Ascending aorta (tissue), 2 donors: ENCODE measurements at regions of chr21 and their contacts with region 1.

Region 1: GRCh38 chr21:32494934-32495703 is 82.6 kb downstream of the EVA1C start:
- DNase-seq: peak in 1 of 2 donors; percentile 65
- H3K4me3 ChIP-seq: no peak overlapping the region
- H3K27ac ChIP-seq: peak overlapping the region; percentile 53 to 83
- H3K4me1 ChIP-seq: peaks cover 20 to 42% of the 10 kb centered on the region in 2 donors
- H3K27me3 ChIP-seq: no peaks in the 10 kb centered on the region
- CTCF ChIP-seq: no peak

Region 2: DNA sequence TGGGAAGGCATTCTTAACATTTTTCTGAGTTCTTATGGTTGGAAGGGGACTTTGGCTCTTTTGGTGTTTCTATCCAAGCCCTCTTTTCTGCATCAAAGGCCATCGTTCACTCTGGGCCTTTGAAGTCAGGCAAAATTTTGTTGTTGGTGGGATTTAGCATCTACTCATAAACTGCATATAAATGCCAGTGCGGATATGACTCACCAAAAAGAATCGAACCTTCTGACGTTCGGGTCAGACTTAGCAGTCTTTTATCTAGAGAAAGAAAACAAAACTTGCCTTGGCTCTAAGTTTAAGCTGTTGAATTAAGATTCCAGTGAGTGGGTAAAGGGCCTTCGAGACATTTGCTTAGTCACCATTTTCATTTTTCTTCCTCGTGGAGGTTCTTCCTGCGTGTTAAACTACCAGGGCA is 31.2 kb before region 1 on chr21:
- intact Hi-C with region 1: loop called (anchors 1 kb)
- DNase-seq: no peak
- H3K4me3 ChIP-seq: no peak overlapping the region
- H3K27ac ChIP-seq: peak overlapping the region; percentile 83 to 93
- H3K4me1 ChIP-seq: peaks cover 8 to 24% of the 10 kb centered on the region in 2 donors
- H3K27me3 ChIP-seq: no peaks in the 10 kb centered on the region
- CTCF ChIP-seq: no peak

Region 3: GRCh38 chr21:32562426-32562825 is 67.3 kb after region 1 on chr21:
- intact Hi-C with region 1: loop called (anchors 2 kb)
- DNase-seq: peak in 1 of 2 donors; percentile 78
- H3K4me3 ChIP-seq: no peak overlapping the region
- H3K27ac ChIP-seq: peak overlapping the region; percentile 64 to 70
- H3K4me1 ChIP-seq: peaks cover 9 to 14% of the 10 kb centered on the region in 2 donors
- H3K27me3 ChIP-seq: no peaks in the 10 kb centered on the region
- CTCF ChIP-seq: peak in 2 of 3 experiments; percentile 49 to 56

Region 4: DNA sequence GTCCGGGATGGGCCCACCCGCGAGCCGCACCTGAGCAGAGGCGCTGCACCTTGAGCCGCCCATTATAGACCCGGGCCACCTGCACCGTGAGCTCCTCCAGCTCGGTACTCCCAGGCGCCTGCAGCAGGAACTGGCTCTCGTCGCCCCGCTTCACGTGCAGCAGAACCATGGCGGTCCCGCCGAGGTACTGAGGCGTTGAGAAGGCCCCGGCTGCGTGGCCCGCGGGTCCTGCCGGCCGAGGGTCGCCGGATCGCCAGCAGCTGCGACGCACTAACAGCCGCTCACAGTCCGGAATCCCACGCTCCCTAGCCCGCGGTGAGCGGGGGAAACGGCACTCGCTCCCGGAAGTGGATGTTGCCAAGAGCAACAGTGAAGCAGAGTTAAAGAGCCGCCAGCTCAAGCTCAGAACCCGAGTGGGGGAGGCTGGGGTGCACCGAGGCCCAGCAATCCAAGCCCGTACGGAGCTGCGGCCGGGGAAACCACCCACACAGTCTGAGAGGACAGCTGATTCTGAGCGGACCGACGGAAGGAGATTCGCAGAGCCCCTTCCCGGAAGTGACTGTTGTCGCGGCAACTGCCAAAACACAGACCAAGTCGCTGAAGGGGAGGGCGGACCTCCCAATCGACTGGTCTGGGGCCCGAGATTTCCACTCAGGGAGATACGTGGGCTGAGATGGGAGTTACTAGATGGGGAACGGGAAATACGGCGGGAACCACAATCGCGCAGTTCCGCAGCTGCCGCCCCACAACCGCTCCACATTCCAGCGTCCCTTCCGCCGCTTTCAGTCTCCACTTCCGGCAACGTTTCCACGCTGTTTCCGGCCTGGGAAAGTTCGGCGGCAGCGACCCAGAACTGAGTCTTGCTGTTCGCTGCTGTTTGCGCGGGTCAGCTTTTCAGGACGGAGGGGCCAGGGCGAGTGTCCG is 117.2 kb after region 1 on chr21 and contains the start of gene CFAP298:
- intact Hi-C with region 1: no loop called
- DNase-seq: peak; percentile 37 to 93
- H3K4me3 ChIP-seq: peak within 1 kb of the TSS; percentile 73 to 83
- H3K27ac ChIP-seq: peak within 1 kb of the TSS; percentile 83 to 86
- H3K4me1 ChIP-seq: peaks cover 0 to 11% of the 10 kb centered on the region in 2 donors
- H3K27me3 ChIP-seq: no peaks in the 10 kb centered on the region
- CTCF ChIP-seq: no peak
- total RNA-seq, gene CFAP298: 18.3 TPM

Region 5: DNA sequence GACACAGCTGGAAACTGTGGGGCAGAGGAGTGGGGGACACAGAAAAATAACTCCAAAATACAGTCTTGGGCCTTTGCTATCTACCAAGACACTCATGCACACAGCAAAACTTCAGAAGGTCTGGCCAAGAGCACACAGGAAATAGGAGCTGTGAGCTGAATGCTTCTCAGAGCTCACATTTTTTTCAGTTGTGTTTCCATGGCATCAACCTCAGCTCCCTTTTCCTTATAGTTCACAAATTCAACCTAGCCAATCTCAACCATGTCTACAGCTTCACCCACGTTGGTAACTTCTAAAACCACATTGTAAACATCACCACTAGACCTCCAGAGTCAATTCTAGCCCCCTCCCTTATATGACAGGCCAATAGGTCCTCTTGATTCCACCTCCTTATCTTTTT is 252.3 kb after region 1 on chr21:
- intact Hi-C with region 1: no loop called
- DNase-seq: no peak
- H3K4me3 ChIP-seq: no peak overlapping the region
- H3K27ac ChIP-seq: no peak overlapping the region
- H3K4me1 ChIP-seq: no peaks in the 10 kb centered on the region
- H3K27me3 ChIP-seq: no peaks in the 10 kb centered on the region
- CTCF ChIP-seq: no peak